ENCODE measurements at regions of chr1 and their contacts with region 1.

Region 1: DNA sequence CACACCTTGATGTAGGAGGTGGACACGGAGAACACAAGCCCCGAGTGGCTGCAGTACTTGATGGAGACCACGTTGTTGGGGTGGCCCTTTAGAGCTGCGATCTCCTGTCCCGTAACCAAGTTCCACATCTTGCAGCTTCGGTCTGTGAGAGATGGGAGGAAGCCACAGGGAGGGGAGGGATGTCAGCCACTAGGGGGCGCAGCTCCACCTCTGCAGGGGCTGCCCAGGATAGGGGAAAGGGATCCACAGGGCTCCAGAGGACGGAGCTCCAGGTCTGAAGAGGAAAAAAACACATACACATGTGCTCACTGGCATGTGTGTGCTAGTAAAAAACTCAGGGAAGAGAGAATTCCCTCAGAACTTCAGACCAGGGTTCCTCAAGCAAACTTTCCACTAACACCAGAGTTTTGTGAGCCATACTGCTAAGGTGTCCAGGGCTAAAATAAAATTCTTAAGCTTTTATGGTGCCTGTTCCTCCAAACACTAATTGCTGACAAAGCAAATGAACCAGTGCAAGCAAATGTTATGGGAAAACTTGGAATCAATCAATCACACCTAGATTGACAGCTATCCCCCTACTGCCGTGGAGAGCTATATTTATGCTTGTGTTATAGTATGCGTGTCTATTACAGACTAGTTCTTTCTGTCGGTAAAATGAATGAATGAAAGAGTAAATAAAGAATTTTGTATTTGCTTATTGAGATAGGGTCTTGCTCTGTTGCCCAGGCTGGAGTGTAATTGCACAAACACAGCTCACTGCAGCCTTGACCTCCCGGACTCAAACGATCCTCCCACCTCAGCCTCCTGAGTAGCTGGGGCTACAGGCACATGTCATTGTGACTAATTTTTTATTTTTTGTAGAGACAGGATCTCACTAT is 43.7 kb downstream of the KIF21B start:
- DNase-seq: peak; percentile 26 to 80 (median 67)
- ATAC-seq: peak; percentile 61
- H3K4me3 ChIP-seq: no peak overlapping the region
- H3K4me3 Mint-ChIP-seq: no peak overlapping the region
- H3K27ac ChIP-seq: no peak overlapping the region
- H3K27ac Mint-ChIP-seq: peak overlapping the region; percentile 23
- H3K4me1 ChIP-seq: no peaks in the 10 kb centered on the region
- H3K4me1 Mint-ChIP-seq: no peaks in the 10 kb centered on the region
- H3K27me3 ChIP-seq: no peaks in the 10 kb centered on the region
- H3K27me3 Mint-ChIP-seq: no peaks in the 10 kb centered on the region
- CTCF ChIP-seq: peak; percentile 66

Region 2: GRCh38 chr1:200811704-200812103 is 168.1 kb before region 1 on chr1:
- CTCF ChIA-PET with region 1: no interaction called
- POLR2A ChIA-PET with region 1: no interaction called
- intact Hi-C with region 1: no loop called
- DNase-seq: no peak
- ATAC-seq: no peak
- H3K4me3 ChIP-seq: no peak overlapping the region
- H3K4me3 Mint-ChIP-seq: no peak overlapping the region
- H3K27ac ChIP-seq: no peak overlapping the region
- H3K27ac Mint-ChIP-seq: no peak overlapping the region
- H3K4me1 ChIP-seq: no peaks in the 10 kb centered on the region
- H3K4me1 Mint-ChIP-seq: no peaks in the 10 kb centered on the region
- H3K27me3 ChIP-seq: no peaks in the 10 kb centered on the region
- H3K27me3 Mint-ChIP-seq: no peaks in the 10 kb centered on the region
- CTCF ChIP-seq: no peak

Region 3: DNA sequence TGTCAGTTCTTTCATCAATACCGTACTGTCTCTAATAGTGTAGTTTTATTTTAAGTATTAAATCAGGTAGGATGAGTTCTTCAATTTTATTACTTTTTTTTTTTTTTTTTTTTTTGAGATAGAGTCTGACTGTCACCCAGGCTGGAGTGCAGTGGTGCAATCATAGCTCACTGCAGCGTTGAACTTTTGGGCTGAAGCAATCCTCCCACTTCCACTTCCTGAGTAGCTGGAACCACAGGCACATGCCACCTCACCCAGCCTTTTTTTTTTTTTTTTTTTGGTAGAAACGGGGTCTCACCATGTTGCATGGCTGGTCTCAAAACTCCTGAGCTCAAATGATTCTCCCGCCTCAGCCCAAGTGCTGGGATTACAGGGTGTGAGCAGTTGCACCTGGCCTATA is 40.9 kb before region 1 on chr1:
- CTCF ChIA-PET with region 1: no interaction called
- POLR2A ChIA-PET with region 1: no interaction called
- intact Hi-C with region 1: no loop called
- DNase-seq: peak in 5 of 9 experiments; percentile 3 to 52 (median 18)
- ATAC-seq: peak; percentile 59
- H3K4me3 ChIP-seq: no peak overlapping the region
- H3K4me3 Mint-ChIP-seq: no peak overlapping the region
- H3K27ac ChIP-seq: no peak overlapping the region
- H3K27ac Mint-ChIP-seq: no peak overlapping the region
- H3K4me1 ChIP-seq: no peaks in the 10 kb centered on the region
- H3K4me1 Mint-ChIP-seq: peaks cover 10% of the 10 kb centered on the region
- H3K27me3 ChIP-seq: no peaks in the 10 kb centered on the region
- H3K27me3 Mint-ChIP-seq: no peaks in the 10 kb centered on the region
- CTCF ChIP-seq: no peak

Region 4: GRCh38 chr1:200992382-200993048 is 12.7 kb after region 1 on chr1:
- CTCF ChIA-PET with region 1: interaction called, 21 read pairs
- POLR2A ChIA-PET with region 1: no interaction called
- intact Hi-C with region 1: no loop called
- DNase-seq: no peak
- ATAC-seq: no peak
- H3K4me3 ChIP-seq: no peak overlapping the region
- H3K4me3 Mint-ChIP-seq: no peak overlapping the region
- H3K27ac ChIP-seq: no peak overlapping the region
- H3K27ac Mint-ChIP-seq: no peak overlapping the region
- H3K4me1 ChIP-seq: no peaks in the 10 kb centered on the region
- H3K4me1 Mint-ChIP-seq: no peaks in the 10 kb centered on the region
- H3K27me3 ChIP-seq: no peaks in the 10 kb centered on the region
- H3K27me3 Mint-ChIP-seq: no peaks in the 10 kb centered on the region
- CTCF ChIP-seq: no peak

Region 5: GRCh38 chr1:201004732-201005131 is 24.9 kb after region 1 on chr1:
- CTCF ChIA-PET with region 1: no interaction called
- POLR2A ChIA-PET with region 1: no interaction called
- intact Hi-C with region 1: no loop called
- DNase-seq: no peak
- ATAC-seq: no peak
- H3K4me3 ChIP-seq: no peak overlapping the region
- H3K4me3 Mint-ChIP-seq: no peak overlapping the region
- H3K27ac ChIP-seq: no peak overlapping the region
- H3K27ac Mint-ChIP-seq: no peak overlapping the region
- H3K4me1 ChIP-seq: peaks cover 5% of the 10 kb centered on the region
- H3K4me1 Mint-ChIP-seq: peaks cover 14% of the 10 kb centered on the region
- H3K27me3 ChIP-seq: no peaks in the 10 kb centered on the region
- H3K27me3 Mint-ChIP-seq: no peaks in the 10 kb centered on the region
- CTCF ChIP-seq: no peak

Region 6: DNA sequence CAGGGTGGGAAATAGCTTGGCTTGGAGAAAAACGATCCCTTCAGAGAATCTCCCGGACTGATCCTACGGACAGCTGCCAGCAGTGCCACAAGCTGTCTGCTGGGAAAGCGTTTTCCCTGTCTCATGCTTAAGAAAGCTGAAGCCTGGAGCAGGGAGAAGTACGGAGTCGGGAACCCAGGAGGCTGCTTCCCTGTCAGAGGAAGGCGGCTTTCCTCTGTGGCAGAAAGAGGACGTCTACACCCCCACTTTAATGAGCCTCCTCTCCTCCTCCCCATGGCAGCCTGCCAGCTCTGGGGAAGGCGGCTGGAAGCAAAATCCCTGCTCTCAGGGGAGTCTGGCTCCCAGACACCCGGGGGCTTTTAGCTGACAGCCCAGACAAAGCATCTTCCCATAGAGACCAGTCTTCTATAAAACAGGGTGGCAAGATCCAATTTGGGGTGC is 36.4 kb after region 1 on chr1:
- CTCF ChIA-PET with region 1: interaction called, 21 read pairs
- POLR2A ChIA-PET with region 1: interaction called, 5 read pairs
- intact Hi-C with region 1: no loop called
- DNase-seq: no peak
- ATAC-seq: no peak
- H3K4me3 ChIP-seq: no peak overlapping the region
- H3K4me3 Mint-ChIP-seq: peak overlapping the region; percentile 46
- H3K27ac ChIP-seq: peak overlapping the region in 1 of 2 experiments; percentile 17
- H3K27ac Mint-ChIP-seq: no peak overlapping the region
- H3K4me1 ChIP-seq: peaks cover 98% of the 10 kb centered on the region
- H3K4me1 Mint-ChIP-seq: peaks cover 95% of the 10 kb centered on the region
- H3K27me3 ChIP-seq: no peaks in the 10 kb centered on the region
- H3K27me3 Mint-ChIP-seq: no peaks in the 10 kb centered on the region
- CTCF ChIP-seq: no peak

Region 7: GRCh38 chr1:201050515-201051277 is 70.9 kb after region 1 on chr1:
- CTCF ChIA-PET with region 1: interaction called, 201 read pairs
- POLR2A ChIA-PET with region 1: no interaction called
- intact Hi-C with region 1: no loop called
- DNase-seq: no peak
- ATAC-seq: no peak
- H3K4me3 ChIP-seq: no peak overlapping the region
- H3K4me3 Mint-ChIP-seq: no peak overlapping the region
- H3K27ac ChIP-seq: no peak overlapping the region
- H3K27ac Mint-ChIP-seq: no peak overlapping the region
- H3K4me1 ChIP-seq: no peaks in the 10 kb centered on the region
- H3K4me1 Mint-ChIP-seq: no peaks in the 10 kb centered on the region
- H3K27me3 ChIP-seq: no peaks in the 10 kb centered on the region
- H3K27me3 Mint-ChIP-seq: no peaks in the 10 kb centered on the region
- CTCF ChIP-seq: no peak

Region 8: GRCh38 chr1:201334325-201335173 is 354.7 kb after region 1 on chr1:
- CTCF ChIA-PET with region 1: no interaction called
- POLR2A ChIA-PET with region 1: no interaction called
- intact Hi-C with region 1: no loop called
- DNase-seq: no peak
- ATAC-seq: no peak
- H3K4me3 ChIP-seq: no peak overlapping the region
- H3K4me3 Mint-ChIP-seq: no peak overlapping the region
- H3K27ac ChIP-seq: no peak overlapping the region
- H3K27ac Mint-ChIP-seq: no peak overlapping the region
- H3K4me1 ChIP-seq: no peaks in the 10 kb centered on the region
- H3K4me1 Mint-ChIP-seq: no peaks in the 10 kb centered on the region
- H3K27me3 ChIP-seq: no peaks in the 10 kb centered on the region
- H3K27me3 Mint-ChIP-seq: peaks cover 3% of the 10 kb centered on the region
- CTCF ChIP-seq: no peak

Measured in CD8-positive, alpha-beta T cell (primary cell).